ENCODE measurements at regions of chr9 and their contacts with region 1.

Region 1: DNA sequence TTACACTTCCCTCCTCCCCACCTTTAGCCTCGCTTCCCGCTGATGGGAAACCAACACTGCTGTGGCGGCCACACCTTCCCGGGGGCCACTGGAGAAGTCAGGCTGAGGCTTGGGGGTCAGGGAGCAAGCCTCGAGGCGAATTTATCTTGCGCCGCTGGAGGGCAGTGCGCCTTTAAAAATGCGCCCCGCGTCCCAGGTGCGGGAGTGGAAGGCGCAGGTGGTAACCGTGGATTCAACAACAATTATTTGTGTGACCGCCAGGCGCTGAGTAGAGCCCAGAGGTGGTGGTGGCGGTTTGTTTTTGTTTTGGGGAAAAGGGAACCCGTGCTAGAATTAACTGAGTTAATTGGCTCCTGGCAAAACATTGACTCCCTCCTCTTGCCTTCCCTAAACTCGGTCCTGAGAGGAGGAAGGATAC is 1.1 kb downstream of the CFAP77 start:
- DNase-seq: peak; percentile 84
- ATAC-seq: peak; percentile 68
- H3K4me3 Mint-ChIP-seq: peak overlapping the region; percentile 64
- H3K27ac Mint-ChIP-seq: no peak overlapping the region
- H3K4me1 Mint-ChIP-seq: peaks cover 27% of the 10 kb centered on the region
- H3K27me3 Mint-ChIP-seq: peaks cover 48% of the 10 kb centered on the region

Region 2: GRCh38 chr9:132486706-132487350 is 75.7 kb after region 1 on chr9:
- CTCF ChIA-PET with region 1: interaction called, 33 read pairs
- POLR2A ChIA-PET with region 1: no interaction called
- DNase-seq: peak; percentile 79
- ATAC-seq: peak; percentile 91
- H3K4me3 Mint-ChIP-seq: peak overlapping the region; percentile 60
- H3K27ac Mint-ChIP-seq: peak overlapping the region; percentile 98
- H3K4me1 Mint-ChIP-seq: peaks cover 34% of the 10 kb centered on the region
- H3K27me3 Mint-ChIP-seq: peaks cover 48% of the 10 kb centered on the region

Region 3: GRCh38 chr9:132575005-132575609 is 164.0 kb after region 1 on chr9:
- CTCF ChIA-PET with region 1: interaction called, 86 read pairs
- POLR2A ChIA-PET with region 1: no interaction called
- DNase-seq: peak; percentile 81
- ATAC-seq: peak; percentile 84
- H3K4me3 Mint-ChIP-seq: no peak overlapping the region
- H3K27ac Mint-ChIP-seq: no peak overlapping the region
- H3K4me1 Mint-ChIP-seq: no peaks in the 10 kb centered on the region
- H3K27me3 Mint-ChIP-seq: peaks cover 48% of the 10 kb centered on the region

Measured in activated CD8-positive, alpha-beta T cell treated with anti-CD3 and anti-CD28 coated beads, Interleukin-2, amount 10 ng/mL, durations not matched to agents 7 days and 5 days (primary cell).